Activated naive CD4-positive, alpha-beta T cell treated with anti-CD3 and anti-CD28 coated beads for 36 hours (primary cell): ENCODE measurements at regions of chr10 and their contacts with region 1.

Region 1: GRCh38 chr10:91901784-91902677 is 7.3 kb downstream of the FGFBP3 start:
- DNase-seq: peak; percentile 85
- H3K4me3 Mint-ChIP-seq: no peak overlapping the region
- H3K27ac Mint-ChIP-seq: peak overlapping the region; percentile 79
- H3K4me1 Mint-ChIP-seq: peaks cover 23% of the 10 kb centered on the region
- H3K27me3 Mint-ChIP-seq: no peaks in the 10 kb centered on the region

Region 2: GRCh38 chr10:91887272-91888076 is 14.6 kb before region 1 on chr10:
- CTCF ChIA-PET with region 1: interaction called, 3 read pairs
- intact Hi-C with region 1: loop called (anchors 1 kb)
- DNase-seq: peak; percentile 34
- H3K4me3 Mint-ChIP-seq: peak overlapping the region; percentile 79
- H3K27ac Mint-ChIP-seq: no peak overlapping the region
- H3K4me1 Mint-ChIP-seq: peaks cover 10% of the 10 kb centered on the region
- H3K27me3 Mint-ChIP-seq: peaks cover 5% of the 10 kb centered on the region

Region 3: GRCh38 chr10:92313750-92314149 is 411.7 kb after region 1 on chr10:
- CTCF ChIA-PET with region 1: no interaction called
- intact Hi-C with region 1: no loop called
- DNase-seq: no peak
- H3K4me3 Mint-ChIP-seq: no peak overlapping the region
- H3K27ac Mint-ChIP-seq: no peak overlapping the region
- H3K4me1 Mint-ChIP-seq: peaks cover 13% of the 10 kb centered on the region
- H3K27me3 Mint-ChIP-seq: no peaks in the 10 kb centered on the region